AG04450 (cell line): ENCODE measurements at regions of chr2 and their contacts with region 1.

Region 1: DNA sequence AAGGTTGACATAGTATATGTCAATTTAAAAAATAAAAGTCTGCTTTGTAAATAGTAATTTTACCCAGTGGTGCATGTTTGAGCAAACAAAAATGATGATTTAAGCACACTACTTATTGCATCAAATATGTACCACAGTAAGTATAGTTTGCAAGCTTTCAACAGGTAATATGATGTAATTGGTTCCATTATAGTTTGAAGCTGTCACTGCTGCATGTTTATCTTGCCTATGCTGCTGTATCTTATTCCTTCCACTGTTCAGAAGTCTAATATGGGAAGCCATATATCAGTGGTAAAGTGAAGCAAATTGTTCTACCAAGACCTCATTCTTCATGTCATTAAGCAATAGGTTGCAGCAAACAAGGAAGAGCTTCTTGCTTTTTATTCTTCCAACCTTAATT is 78.6 kb upstream of the CSRNP3 start:
- DNase-seq: no peak
- H3K4me3 ChIP-seq: no peak overlapping the region
- H3K27ac ChIP-seq: no peak overlapping the region
- H3K27me3 ChIP-seq: no peaks in the 10 kb centered on the region
- CTCF ChIP-seq: no peak

Region 2: DNA sequence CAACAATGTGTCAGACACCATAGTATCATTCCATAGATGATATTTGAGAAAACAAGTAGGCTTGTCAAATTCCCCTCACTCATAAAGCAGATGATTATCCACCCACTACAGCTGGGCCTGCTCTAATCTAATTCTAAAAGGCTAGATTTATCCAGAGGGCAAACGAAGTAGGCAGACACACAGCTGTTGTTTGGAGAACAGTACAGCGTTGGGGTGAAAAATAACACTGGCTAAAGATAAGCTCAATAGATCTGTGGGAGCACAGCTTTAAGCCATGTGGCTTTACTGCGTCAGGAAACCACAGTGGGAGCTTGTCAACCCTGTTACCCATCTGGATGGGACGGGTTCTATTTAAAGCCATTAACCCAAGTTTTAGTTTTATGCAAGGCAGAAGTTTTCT is 500.3 kb before region 1 on chr2:
- CTCF ChIA-PET with region 1: no interaction called
- POLR2A ChIA-PET with region 1: no interaction called
- DNase-seq: no peak
- H3K4me3 ChIP-seq: no peak overlapping the region
- H3K27ac ChIP-seq: no peak overlapping the region
- H3K27me3 ChIP-seq: no peaks in the 10 kb centered on the region
- CTCF ChIP-seq: no peak

Region 3: DNA sequence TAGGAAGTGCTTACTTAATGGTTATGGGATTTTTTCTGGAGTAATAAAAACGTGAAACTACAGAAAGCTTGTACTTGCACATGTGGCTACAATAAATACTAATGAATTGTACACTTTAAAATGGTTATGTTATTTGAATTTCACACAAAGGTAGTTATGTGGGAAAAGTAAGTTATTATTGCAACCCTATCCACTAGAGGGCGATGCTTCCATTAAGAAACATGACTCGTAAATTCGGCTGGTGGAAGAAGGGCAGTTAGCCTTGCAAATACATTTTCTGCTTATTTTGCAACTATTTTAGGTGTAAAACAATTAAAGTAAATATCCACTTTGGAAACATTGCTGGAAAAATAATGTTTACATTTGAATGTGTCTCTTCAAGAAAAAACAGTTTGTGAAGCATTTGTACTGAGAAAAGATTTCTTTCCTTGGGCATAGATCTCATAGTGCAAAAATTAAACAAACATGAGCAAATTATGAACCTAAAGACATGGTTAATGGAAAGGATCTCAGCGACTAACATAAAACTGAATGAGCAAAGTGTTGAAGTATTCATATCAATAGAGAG is 10.5 kb after region 1 on chr2:
- CTCF ChIA-PET with region 1: interaction called, 21 read pairs
- POLR2A ChIA-PET with region 1: no interaction called
- DNase-seq: peak; percentile 55
- H3K4me3 ChIP-seq: no peak overlapping the region
- H3K27ac ChIP-seq: no peak overlapping the region
- H3K27me3 ChIP-seq: no peaks in the 10 kb centered on the region
- CTCF ChIP-seq: peak; percentile 79

Region 4: DNA sequence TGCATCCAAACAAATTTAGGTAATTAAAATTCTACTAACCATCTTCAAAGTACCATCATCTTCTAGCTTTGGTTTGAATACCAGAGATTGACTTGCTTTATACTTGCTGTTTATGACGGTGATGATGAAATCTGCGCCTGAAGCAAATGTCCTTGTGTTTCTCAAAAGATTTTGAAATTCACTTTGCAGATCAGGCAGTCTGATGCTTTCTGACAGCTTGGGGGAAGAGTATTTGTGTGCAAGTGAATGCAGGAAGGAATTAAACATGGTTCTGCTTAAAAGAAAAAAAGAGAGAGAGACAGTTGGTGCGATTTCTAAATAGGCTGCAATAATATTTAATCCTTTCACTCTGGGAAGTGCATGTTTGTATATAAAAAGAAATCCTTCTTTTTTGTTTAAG is 108.3 kb after region 1 on chr2:
- CTCF ChIA-PET with region 1: no interaction called
- POLR2A ChIA-PET with region 1: no interaction called
- DNase-seq: no peak
- H3K4me3 ChIP-seq: no peak overlapping the region
- H3K27ac ChIP-seq: no peak overlapping the region
- H3K27me3 ChIP-seq: no peaks in the 10 kb centered on the region
- CTCF ChIP-seq: no peak